ENCODE measurements at regions of chr1 and their contacts with region 1.

Region 1: DNA sequence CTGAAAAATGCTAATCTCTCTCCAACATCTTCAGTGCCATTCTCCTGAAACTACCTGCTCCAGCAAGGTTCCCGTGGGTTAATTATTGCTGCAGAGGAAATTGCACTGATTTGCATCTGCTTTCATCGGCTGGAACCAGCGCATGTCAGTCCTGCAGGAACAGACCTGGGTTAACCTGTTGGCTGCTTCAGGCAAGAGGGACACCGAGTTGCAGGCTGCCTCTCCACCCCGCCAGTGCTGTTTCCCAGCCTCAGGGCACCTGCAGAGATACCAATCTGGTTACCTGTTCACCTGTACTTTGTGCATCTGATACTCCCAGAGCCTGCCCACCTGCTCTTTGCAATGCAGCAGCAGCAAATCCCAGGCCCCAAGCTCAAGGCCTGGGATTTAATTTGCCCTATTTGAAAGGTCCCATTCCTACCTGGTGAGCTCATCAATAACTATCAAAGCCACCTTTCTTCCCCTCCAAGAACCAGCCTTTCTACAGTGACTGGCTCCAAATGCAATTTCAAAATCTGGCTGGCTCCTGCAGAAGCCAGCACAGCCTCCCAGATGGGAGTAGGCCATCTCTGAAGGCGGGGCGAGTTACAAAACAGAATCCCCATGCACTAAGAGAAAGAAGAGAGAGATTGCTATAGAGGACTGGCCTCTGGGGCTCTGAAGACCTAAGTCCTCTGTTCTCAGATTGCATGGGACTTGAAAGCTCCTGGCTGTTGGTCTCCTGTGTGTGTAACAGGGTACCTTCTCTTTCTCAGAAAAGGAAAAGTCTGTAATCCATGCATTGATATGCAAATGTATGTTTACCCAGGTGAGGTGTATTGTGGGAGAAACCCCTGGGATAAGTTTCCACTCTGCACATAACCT is 67.8 kb downstream of the TOMM20 start:
- DNase-seq: no peak
- H3K4me3 ChIP-seq: no peak overlapping the region
- H3K4me3 Mint-ChIP-seq: no peak overlapping the region
- H3K27ac ChIP-seq: no peak overlapping the region
- H3K27ac Mint-ChIP-seq: peak overlapping the region in 1 of 7 donors; percentile 15
- H3K4me1 ChIP-seq: peaks cover 14% of the 10 kb centered on the region
- H3K4me1 Mint-ChIP-seq: peaks cover 12 to 31% (median 18%) of the 10 kb centered on the region in 4 donors
- H3K27me3 ChIP-seq: no peaks in the 10 kb centered on the region
- H3K27me3 Mint-ChIP-seq: no peaks in the 10 kb centered on the region

Region 2: GRCh38 chr1:234875953-234876855 is 184.6 kb before region 1 on chr1:
- CTCF ChIA-PET with region 1: no interaction called
- POLR2A ChIA-PET with region 1: no interaction called
- intact Hi-C with region 1: no loop called
- DNase-seq: no peak
- H3K4me3 ChIP-seq: no peak overlapping the region
- H3K4me3 Mint-ChIP-seq: no peak overlapping the region
- H3K27ac ChIP-seq: no peak overlapping the region
- H3K27ac Mint-ChIP-seq: peak overlapping the region in 1 of 7 donors; percentile 50
- H3K4me1 ChIP-seq: peaks cover 17% of the 10 kb centered on the region
- H3K4me1 Mint-ChIP-seq: peaks cover 0 to 8% (median 4%) of the 10 kb centered on the region in 4 donors
- H3K27me3 ChIP-seq: no peaks in the 10 kb centered on the region
- H3K27me3 Mint-ChIP-seq: no peaks in the 10 kb centered on the region

Region 3: GRCh38 chr1:235018161-235018560 is 42.7 kb before region 1 on chr1:
- CTCF ChIA-PET with region 1: no interaction called
- POLR2A ChIA-PET with region 1: no interaction called
- intact Hi-C with region 1: loop called (anchors 5 kb)
- DNase-seq: no peak
- H3K4me3 ChIP-seq: no peak overlapping the region
- H3K4me3 Mint-ChIP-seq: no peak overlapping the region
- H3K27ac ChIP-seq: no peak overlapping the region
- H3K27ac Mint-ChIP-seq: peak overlapping the region in 2 of 7 donors; percentile 9 to 41
- H3K4me1 ChIP-seq: peaks cover 21% of the 10 kb centered on the region
- H3K4me1 Mint-ChIP-seq: peaks cover 17 to 43% (median 23%) of the 10 kb centered on the region in 4 donors
- H3K27me3 ChIP-seq: no peaks in the 10 kb centered on the region
- H3K27me3 Mint-ChIP-seq: no peaks in the 10 kb centered on the region

Measured in CD4-positive, alpha-beta memory T cell (primary cell).